ENCODE measurements at regions of chr4 and their contacts with region 1.

Region 1: GRCh38 chr4:99723612-99724011 is 66.0 kb upstream of the C4orf54 start:
- DNase-seq: peak; percentile 68 to 88
- ATAC-seq: peak; percentile 98 to 99 (median 99)
- H3K4me3 ChIP-seq: peak overlapping the region; percentile 3
- H3K27ac ChIP-seq: peak overlapping the region; percentile 93
- H3K4me1 ChIP-seq: peaks cover 56% of the 10 kb centered on the region
- H3K27me3 ChIP-seq: no peaks in the 10 kb centered on the region
- CTCF ChIP-seq: no peak

Region 2: GRCh38 chr4:99655308-99656081 is 68.1 kb before region 1 on chr4:
- intact Hi-C with region 1: loop called (anchors 2 to 5 kb)
- DNase-seq: peak in 1 of 2 donors; percentile 83
- ATAC-seq: peak; percentile 28 to 54 (median 51)
- H3K4me3 ChIP-seq: peak overlapping the region; percentile 78
- H3K27ac ChIP-seq: peak overlapping the region; percentile 99
- H3K4me1 ChIP-seq: peaks cover 30% of the 10 kb centered on the region
- H3K27me3 ChIP-seq: no peaks in the 10 kb centered on the region
- CTCF ChIP-seq: no peak

Region 3: GRCh38 chr4:99679204-99679603 is 44.4 kb before region 1 on chr4:
- intact Hi-C with region 1: loop called in 1 of 2 experiments (anchors 5 kb)
- DNase-seq: peak; percentile 32 to 74
- ATAC-seq: peak; percentile 95 to 98 (median 98)
- H3K4me3 ChIP-seq: no peak overlapping the region
- H3K27ac ChIP-seq: peak overlapping the region; percentile 89
- H3K4me1 ChIP-seq: peaks cover 15% of the 10 kb centered on the region
- H3K27me3 ChIP-seq: no peaks in the 10 kb centered on the region
- CTCF ChIP-seq: peak; percentile 36

Region 4: DNA sequence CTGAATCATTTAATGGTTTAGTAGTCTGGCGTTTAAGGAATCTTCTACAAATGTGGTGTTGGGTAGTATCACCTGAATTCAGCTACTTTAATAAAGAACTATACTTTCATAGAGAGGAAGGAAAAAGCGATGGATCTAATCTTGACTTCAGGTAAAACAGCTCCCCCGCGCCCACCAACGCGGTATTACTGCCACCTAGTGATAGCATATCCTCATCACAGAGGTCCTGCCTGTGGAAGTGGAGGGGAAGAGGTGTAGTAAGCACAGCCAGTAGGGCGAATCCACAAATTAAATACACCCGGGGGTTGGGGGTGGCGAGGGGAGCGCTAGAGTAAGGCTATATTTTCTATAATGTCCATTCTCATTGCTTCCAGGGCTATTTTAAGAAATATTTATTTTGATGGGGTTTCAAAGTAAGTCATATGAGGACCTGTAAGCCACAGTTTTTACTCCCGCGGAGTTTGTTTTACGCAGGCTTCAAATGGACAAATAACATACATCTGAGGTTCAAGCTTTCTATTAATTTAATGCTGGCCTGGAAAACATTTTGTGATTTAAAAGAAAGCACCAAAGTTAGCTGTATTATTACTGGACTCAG is 84.7 kb after region 1 on chr4:
- intact Hi-C with region 1: loop called in 1 of 2 experiments (anchors 5 kb)
- DNase-seq: peak; percentile 47 to 71
- ATAC-seq: peak; percentile 88 to 96 (median 92)
- H3K4me3 ChIP-seq: no peak overlapping the region
- H3K27ac ChIP-seq: peak overlapping the region; percentile 69
- H3K4me1 ChIP-seq: peaks cover 31% of the 10 kb centered on the region
- H3K27me3 ChIP-seq: no peaks in the 10 kb centered on the region
- CTCF ChIP-seq: peak; percentile 84